ENCODE measurements at regions of chr13 and their contacts with region 1.

Region 1: GRCh38 chr13:23020223-23020843 is 160.4 kb upstream of the SGCG start:
- DNase-seq: peak; percentile 57
- ATAC-seq: peak; percentile 88
- H3K4me3 ChIP-seq: no peak overlapping the region
- H3K27ac ChIP-seq: no peak overlapping the region
- H3K4me1 ChIP-seq: no peaks in the 10 kb centered on the region
- H3K27me3 ChIP-seq: no peaks in the 10 kb centered on the region
- CTCF ChIP-seq: peak; percentile 65
- POLR2A ChIP-seq: no peak
- RAD21 ChIP-seq: peak; percentile 45

Region 2: DNA sequence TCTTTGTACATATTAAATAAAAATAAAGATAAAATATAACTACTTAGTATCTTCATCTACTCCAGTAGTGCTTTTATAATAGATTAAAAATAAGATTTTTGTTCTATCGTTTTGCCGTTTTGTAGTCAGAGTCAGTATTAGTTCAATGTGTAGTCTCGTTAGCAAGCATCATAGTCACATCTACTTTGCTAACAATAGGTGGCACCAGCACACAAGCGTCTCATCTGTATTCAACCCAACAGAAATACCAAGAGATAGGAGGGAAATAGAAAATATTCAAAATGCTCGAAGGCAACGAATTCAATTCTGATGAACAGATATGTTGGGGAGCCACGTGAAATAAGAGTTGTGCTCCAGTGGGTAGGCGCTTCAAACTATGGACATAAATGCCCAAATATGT is 1395.0 kb before region 1 on chr13:
- CTCF ChIA-PET with region 1: no interaction called
- POLR2A ChIA-PET with region 1: no interaction called
- dilution Hi-C with region 1: no loop called
- in situ Hi-C with region 1: no loop called
- intact Hi-C with region 1: loop called (anchors 1 kb)
- DNase-seq: peak; percentile 52
- ATAC-seq: peak; percentile 94
- H3K4me3 ChIP-seq: no peak overlapping the region
- H3K27ac ChIP-seq: no peak overlapping the region
- H3K4me1 ChIP-seq: no peaks in the 10 kb centered on the region
- H3K27me3 ChIP-seq: peaks cover 4% of the 10 kb centered on the region
- CTCF ChIP-seq: peak; percentile 74
- POLR2A ChIP-seq: no peak
- RAD21 ChIP-seq: peak; percentile 82

Region 3: DNA sequence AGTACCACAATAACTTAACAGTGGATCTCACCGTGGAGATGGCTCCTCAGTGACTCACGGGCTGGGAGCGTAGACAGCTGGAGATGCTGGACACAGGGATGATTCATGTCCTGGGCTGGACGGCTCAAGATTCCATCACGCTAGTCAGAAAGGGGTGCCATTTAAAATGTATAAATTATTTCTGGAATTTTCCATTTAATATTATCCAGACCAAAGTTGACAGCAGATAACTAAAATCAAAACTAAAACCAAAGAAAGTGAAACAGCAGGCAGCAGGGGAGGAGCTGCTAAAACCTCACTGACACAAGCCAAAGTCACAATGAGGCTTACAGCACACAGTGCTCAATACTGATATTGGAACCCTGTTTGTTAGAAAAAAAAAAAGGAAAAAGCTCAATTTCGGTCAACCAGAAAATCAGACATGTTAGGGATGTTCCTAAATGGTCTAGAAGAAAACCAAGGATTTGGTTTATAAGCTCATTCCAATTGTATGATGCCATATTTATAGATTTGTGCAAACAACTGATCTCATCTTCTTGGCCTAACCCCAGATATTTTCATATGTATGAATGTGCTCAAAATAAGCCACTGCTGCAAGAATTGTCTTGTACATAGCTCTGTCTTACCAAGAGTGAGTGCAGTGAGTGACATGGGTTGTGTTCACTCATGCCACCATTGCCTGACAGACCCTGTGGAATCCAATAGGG is 301.4 kb after region 1 on chr13:
- CTCF ChIA-PET with region 1: no interaction called
- POLR2A ChIA-PET with region 1: no interaction called
- dilution Hi-C with region 1: no loop called
- in situ Hi-C with region 1: no loop called
- intact Hi-C with region 1: loop called (anchors 5 kb)
- DNase-seq: peak; percentile 94
- ATAC-seq: peak; percentile 82
- H3K4me3 ChIP-seq: peak overlapping the region; percentile 32; the same call in 1 of the 2 replicates
- H3K27ac ChIP-seq: peak overlapping the region; percentile 97
- H3K4me1 ChIP-seq: peaks cover 20% of the 10 kb centered on the region
- H3K27me3 ChIP-seq: no peaks in the 10 kb centered on the region
- CTCF ChIP-seq: no peak
- POLR2A ChIP-seq: peak; percentile 36; the same call in 1 of the 2 replicates
- RAD21 ChIP-seq: no peak